CD4-positive, alpha-beta T cell (primary cell): ENCODE measurements at regions of chr12 and their contacts with region 1.

Region 1: DNA sequence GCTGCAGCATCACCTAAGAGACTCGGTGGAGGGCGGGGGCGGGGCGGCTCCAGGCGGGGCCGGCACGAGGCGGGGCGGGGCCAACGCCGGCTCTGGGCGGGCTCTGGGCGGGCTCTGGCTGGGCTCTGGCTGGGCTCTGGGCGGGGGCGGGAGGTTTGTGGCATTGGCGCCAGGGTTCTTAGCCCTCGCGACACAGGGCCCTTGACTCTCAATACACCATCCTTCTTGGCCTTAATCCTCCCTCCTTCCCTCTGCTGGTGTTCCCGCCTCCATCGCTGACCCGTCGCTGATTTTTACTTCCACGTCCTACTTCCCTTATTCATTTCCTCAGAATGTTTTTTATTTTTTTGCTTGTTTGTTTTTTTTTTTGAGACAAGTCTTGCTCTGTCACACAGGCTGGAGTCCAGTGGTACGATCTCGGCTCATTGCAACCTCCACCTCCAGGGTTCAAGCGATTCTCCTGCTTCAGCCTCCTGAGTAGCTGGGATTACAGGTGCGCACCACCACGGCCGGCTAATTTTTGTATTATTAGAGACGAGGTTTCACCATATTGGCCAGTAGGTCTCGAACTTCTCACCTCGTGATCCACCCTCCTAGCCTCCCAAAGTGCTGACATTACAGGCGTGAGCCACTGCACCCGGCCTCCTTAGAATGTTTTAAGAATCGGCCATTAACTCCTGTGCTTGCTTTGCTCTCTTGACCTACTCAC is at the start of gene BLTP3B:
- DNase-seq: peak; percentile 78 to 96 (median 90)
- ATAC-seq: peak; percentile 94
- H3K4me3 ChIP-seq: peak within 1 kb of the TSS; percentile 90
- H3K4me3 Mint-ChIP-seq: peak within 1 kb of the TSS; percentile 97
- H3K27ac ChIP-seq: peak within 1 kb of the TSS; percentile 86 to 89
- H3K27ac Mint-ChIP-seq: peak within 1 kb of the TSS; percentile 84
- H3K4me1 ChIP-seq: peaks cover 20% of the 10 kb centered on the region
- H3K4me1 Mint-ChIP-seq: peaks cover 44% of the 10 kb centered on the region
- H3K27me3 ChIP-seq: no peaks in the 10 kb centered on the region
- H3K27me3 Mint-ChIP-seq: no peaks in the 10 kb centered on the region
- CTCF ChIP-seq: no peak
- total RNA-seq, gene BLTP3B: 23.0 to 23.4 TPM

Region 2: GRCh38 chr12:100154474-100155247 is 11.7 kb after region 1 on chr12:
- CTCF ChIA-PET with region 1: interaction called, 12 read pairs
- POLR2A ChIA-PET with region 1: interaction called, 3 read pairs
- intact Hi-C with region 1: no loop called
- DNase-seq: peak; percentile 53 to 82 (median 64)
- ATAC-seq: peak; percentile 74
- H3K4me3 ChIP-seq: no peak overlapping the region
- H3K4me3 Mint-ChIP-seq: no peak overlapping the region
- H3K27ac ChIP-seq: no peak overlapping the region
- H3K27ac Mint-ChIP-seq: no peak overlapping the region
- H3K4me1 ChIP-seq: peaks cover 6% of the 10 kb centered on the region
- H3K4me1 Mint-ChIP-seq: peaks cover 4% of the 10 kb centered on the region
- H3K27me3 ChIP-seq: no peaks in the 10 kb centered on the region
- H3K27me3 Mint-ChIP-seq: no peaks in the 10 kb centered on the region
- CTCF ChIP-seq: peak; percentile 86

Region 3: DNA sequence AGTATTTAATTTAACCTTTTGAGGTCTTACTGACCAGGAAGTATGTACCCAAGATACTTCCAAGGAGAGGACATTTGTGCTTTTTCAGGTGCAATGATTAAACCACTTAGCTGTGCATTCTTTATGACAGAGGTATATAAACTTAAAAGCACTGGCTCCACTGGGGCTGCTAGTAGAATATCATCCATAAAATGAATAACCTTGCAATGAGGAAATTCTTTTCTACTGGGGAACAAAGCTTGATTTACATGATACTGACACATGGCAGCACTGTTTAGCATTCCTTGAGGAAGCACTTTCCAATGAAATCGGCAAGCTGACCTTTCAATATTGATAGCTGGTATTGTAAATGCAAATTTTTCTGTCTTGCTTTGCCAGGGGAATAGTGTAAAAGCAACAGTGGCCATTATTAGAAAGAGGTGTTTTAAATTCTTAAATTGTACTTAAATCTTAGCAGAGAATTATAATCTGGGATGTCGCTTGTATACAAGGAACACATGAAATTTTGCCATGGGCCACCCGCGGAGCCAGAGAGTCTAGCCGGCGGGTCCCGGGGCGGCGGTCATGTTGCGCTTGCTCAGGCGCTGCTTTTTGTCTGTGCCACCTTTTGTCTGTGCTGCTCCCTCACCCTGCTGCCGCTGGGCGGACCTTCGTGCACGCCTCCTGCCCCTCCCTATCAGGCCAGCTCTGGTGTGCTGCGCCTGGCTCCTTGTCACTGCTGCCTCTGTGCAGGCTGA is 20.6 kb after region 1 on chr12:
- CTCF ChIA-PET with region 1: no interaction called
- POLR2A ChIA-PET with region 1: no interaction called
- intact Hi-C with region 1: loop called in 1 of 2 experiments (anchors 2 kb)
- DNase-seq: peak; percentile 49 to 85 (median 64)
- ATAC-seq: peak; percentile 100
- H3K4me3 ChIP-seq: no peak overlapping the region
- H3K4me3 Mint-ChIP-seq: peak overlapping the region; percentile 64
- H3K27ac ChIP-seq: no peak overlapping the region
- H3K27ac Mint-ChIP-seq: no peak overlapping the region
- H3K4me1 ChIP-seq: peaks cover 8% of the 10 kb centered on the region
- H3K4me1 Mint-ChIP-seq: peaks cover 12% of the 10 kb centered on the region
- H3K27me3 ChIP-seq: no peaks in the 10 kb centered on the region
- H3K27me3 Mint-ChIP-seq: no peaks in the 10 kb centered on the region
- CTCF ChIP-seq: no peak

Region 4: DNA sequence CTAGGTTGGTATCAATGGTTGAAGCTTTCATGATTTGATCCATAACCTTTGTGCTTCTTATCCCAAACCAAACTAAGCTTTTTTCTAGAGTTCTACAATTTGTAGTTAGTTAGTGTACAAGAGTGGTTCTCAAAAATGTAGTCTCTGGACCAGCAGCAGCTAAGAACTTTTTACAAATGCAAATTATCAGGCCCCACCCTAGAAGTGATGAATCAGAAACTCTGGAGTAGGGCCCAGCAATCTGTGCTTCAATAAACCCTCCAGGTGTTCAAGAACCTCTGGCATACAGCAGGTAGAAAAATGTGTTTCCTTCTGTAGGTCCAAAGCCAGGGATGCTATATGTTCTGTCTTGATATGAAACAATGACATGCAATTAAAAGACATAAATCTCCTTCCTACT is 31.5 kb after region 1 on chr12:
- CTCF ChIA-PET with region 1: no interaction called
- POLR2A ChIA-PET with region 1: no interaction called
- intact Hi-C with region 1: no loop called
- DNase-seq: no peak
- ATAC-seq: no peak
- H3K4me3 ChIP-seq: no peak overlapping the region
- H3K4me3 Mint-ChIP-seq: no peak overlapping the region
- H3K27ac ChIP-seq: no peak overlapping the region
- H3K27ac Mint-ChIP-seq: no peak overlapping the region
- H3K4me1 ChIP-seq: no peaks in the 10 kb centered on the region
- H3K4me1 Mint-ChIP-seq: no peaks in the 10 kb centered on the region
- H3K27me3 ChIP-seq: no peaks in the 10 kb centered on the region
- H3K27me3 Mint-ChIP-seq: no peaks in the 10 kb centered on the region
- CTCF ChIP-seq: no peak

Region 5: GRCh38 chr12:100200463-100201181 is 57.6 kb after region 1 on chr12 and contains the start of gene ACTR6:
- CTCF ChIA-PET with region 1: no interaction called
- POLR2A ChIA-PET with region 1: interaction called, 5 read pairs
- intact Hi-C with region 1: loop called (anchors 1 to 2 kb)
- DNase-seq: peak; percentile 94 to 99 (median 97)
- ATAC-seq: peak; percentile 84
- H3K4me3 ChIP-seq: peak within 1 kb of the TSS; percentile 73
- H3K4me3 Mint-ChIP-seq: peak within 1 kb of the TSS; percentile 98
- H3K27ac ChIP-seq: peak within 1 kb of the TSS; percentile 86 to 91
- H3K27ac Mint-ChIP-seq: peak within 1 kb of the TSS; percentile 99
- H3K4me1 ChIP-seq: peaks cover 47% of the 10 kb centered on the region
- H3K4me1 Mint-ChIP-seq: peaks cover 40% of the 10 kb centered on the region
- H3K27me3 ChIP-seq: no peaks in the 10 kb centered on the region
- H3K27me3 Mint-ChIP-seq: no peaks in the 10 kb centered on the region
- CTCF ChIP-seq: no peak
- total RNA-seq, gene ACTR6: 21.3 to 21.8 TPM

Region 6: GRCh38 chr12:100266835-100267618 is 124.0 kb after region 1 on chr12 and contains the starts of genes DEPDC4 and SCYL2:
- CTCF ChIA-PET with region 1: no interaction called
- POLR2A ChIA-PET with region 1: interaction called, 5 read pairs
- intact Hi-C with region 1: loop called (anchors 2 to 5 kb)
- DNase-seq: peak; percentile 88 to 97 (median 93)
- ATAC-seq: peak; percentile 90
- H3K4me3 ChIP-seq: peak within 1 kb of the TSS; percentile 85
- H3K4me3 Mint-ChIP-seq: peak within 1 kb of the TSS; percentile 98
- H3K27ac ChIP-seq: peak within 1 kb of the TSS; percentile 72 to 86
- H3K27ac Mint-ChIP-seq: peak within 1 kb of the TSS; percentile 96
- H3K4me1 ChIP-seq: peaks cover 12% of the 10 kb centered on the region
- H3K4me1 Mint-ChIP-seq: peaks cover 42% of the 10 kb centered on the region
- H3K27me3 ChIP-seq: no peaks in the 10 kb centered on the region
- H3K27me3 Mint-ChIP-seq: no peaks in the 10 kb centered on the region
- CTCF ChIP-seq: no peak
- total RNA-seq, gene DEPDC4: 0.27 to 0.50 TPM
- total RNA-seq, gene SCYL2: 37.5 to 40.8 TPM

Region 7: DNA sequence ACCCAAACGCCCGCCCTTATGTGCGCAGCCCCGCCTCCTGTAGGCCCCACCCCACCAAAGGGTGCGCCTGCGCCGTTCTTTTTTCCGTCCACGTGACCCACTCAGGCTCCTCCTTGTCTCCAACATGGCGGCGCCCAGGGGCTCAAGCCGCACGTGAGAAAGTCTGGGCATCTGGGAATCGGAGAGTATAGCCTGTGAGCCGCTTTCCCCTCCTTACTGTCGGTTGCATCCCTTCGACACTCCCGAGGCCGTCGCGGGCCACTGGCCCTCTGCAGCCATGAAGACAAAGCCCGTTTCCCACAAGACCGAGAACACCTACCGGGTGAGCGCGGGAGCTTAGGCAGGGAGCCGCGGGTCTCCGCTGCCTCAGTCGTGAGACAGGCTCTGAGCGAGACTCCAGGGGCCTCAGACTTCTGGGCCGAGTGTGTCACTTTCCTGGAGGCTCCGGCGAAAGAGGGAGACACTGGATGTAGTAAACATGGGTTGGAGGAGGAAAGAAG is 1137.1 kb after region 1 on chr12 and contains the start of gene UTP20:
- CTCF ChIA-PET with region 1: no interaction called
- POLR2A ChIA-PET with region 1: no interaction called
- intact Hi-C with region 1: loop called in 1 of 2 experiments (anchors 5 kb)
- DNase-seq: peak; percentile 89 to 96 (median 94)
- ATAC-seq: peak; percentile 100
- H3K4me3 ChIP-seq: peak within 1 kb of the TSS; percentile 72
- H3K4me3 Mint-ChIP-seq: peak within 1 kb of the TSS; percentile 97
- H3K27ac ChIP-seq: no peak within 1 kb of the TSS
- H3K27ac Mint-ChIP-seq: peak within 1 kb of the TSS; percentile 71
- H3K4me1 ChIP-seq: peaks cover 8% of the 10 kb centered on the region
- H3K4me1 Mint-ChIP-seq: peaks cover 25% of the 10 kb centered on the region
- H3K27me3 ChIP-seq: no peaks in the 10 kb centered on the region
- H3K27me3 Mint-ChIP-seq: peaks cover 13% of the 10 kb centered on the region
- CTCF ChIP-seq: no peak
- total RNA-seq, gene UTP20: 9.1 to 9.6 TPM

Region 8: GRCh38 chr12:101823891-101824290 is 1680.9 kb after region 1 on chr12:
- CTCF ChIA-PET with region 1: no interaction called
- POLR2A ChIA-PET with region 1: no interaction called
- intact Hi-C with region 1: loop called in 1 of 2 experiments (anchors 5 kb)
- DNase-seq: peak; percentile 40 to 90 (median 56)
- ATAC-seq: peak; percentile 99
- H3K4me3 ChIP-seq: no peak overlapping the region
- H3K4me3 Mint-ChIP-seq: peak overlapping the region; percentile 44
- H3K27ac ChIP-seq: no peak overlapping the region
- H3K27ac Mint-ChIP-seq: peak overlapping the region; percentile 83
- H3K4me1 ChIP-seq: peaks cover 47% of the 10 kb centered on the region
- H3K4me1 Mint-ChIP-seq: peaks cover 69% of the 10 kb centered on the region
- H3K27me3 ChIP-seq: no peaks in the 10 kb centered on the region
- H3K27me3 Mint-ChIP-seq: no peaks in the 10 kb centered on the region
- CTCF ChIP-seq: peak; percentile 42